Esophagus muscularis mucosa (tissue), 4 donors: ENCODE measurements at regions of chr5 and their contacts with region 1.

Region 1: DNA sequence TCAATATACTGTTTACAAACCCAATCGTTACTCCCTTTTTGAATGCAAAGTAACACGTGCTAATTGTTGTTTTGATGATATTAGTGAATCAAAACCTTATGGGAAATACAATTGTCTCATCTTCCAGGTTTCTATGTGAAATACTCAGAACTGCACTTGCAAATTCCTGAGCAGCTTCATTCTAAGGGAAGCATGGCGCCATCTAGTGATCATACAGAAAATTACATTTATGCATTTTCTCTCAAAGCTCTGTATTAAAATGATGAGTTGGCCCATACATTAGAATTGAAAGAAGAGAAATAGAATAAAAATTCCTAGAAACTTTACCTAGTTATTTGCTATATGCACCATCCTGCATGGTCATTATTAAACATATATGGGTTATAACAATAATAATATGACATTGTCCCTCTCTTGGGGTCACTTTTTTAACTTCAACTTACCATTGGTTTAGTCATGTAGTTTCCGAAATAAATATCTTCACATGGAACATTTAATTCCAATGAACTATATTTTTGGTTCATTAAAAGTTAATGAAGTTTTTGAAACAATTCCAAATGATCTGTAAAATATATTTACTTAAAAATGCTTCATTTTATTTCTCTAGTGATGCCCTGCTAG is 220.0 kb downstream of the PDE4D start:
- DNase-seq: no peak
- H3K4me3 ChIP-seq: no peak overlapping the region
- H3K27ac ChIP-seq: no peak overlapping the region
- H3K4me1 ChIP-seq: peaks cover 0 to 5% (median 0%) of the 10 kb centered on the region in 4 donors
- H3K27me3 ChIP-seq: no peaks in the 10 kb centered on the region
- CTCF ChIP-seq: peak; percentile 70 to 88 (median 75)
- EP300 ChIP-seq: no peak
- POLR2A ChIP-seq: no peak

Region 2: DNA sequence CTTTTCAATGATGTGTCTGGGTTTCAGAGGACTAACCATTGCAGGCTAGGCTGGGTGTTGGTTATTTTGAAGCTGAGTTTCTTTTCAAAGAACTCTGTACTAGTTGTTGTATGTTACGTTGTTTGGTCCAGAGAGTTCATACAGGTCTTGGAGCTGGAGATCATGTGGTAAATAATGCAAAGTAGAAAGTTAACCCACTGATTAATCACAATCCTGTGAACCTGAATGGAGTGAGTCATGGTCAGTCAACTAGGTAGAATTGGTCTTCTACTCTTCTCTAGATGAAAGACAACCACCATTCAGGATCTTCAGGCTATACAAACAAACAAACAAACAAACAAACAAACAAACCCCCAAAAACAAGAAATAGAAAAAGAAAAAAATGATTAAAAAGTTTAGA is 1802.1 kb before region 1 on chr5:
- intact Hi-C with region 1: no loop called
- DNase-seq: no peak
- H3K4me3 ChIP-seq: no peak overlapping the region
- H3K27ac ChIP-seq: no peak overlapping the region
- H3K4me1 ChIP-seq: no peaks in the 10 kb centered on the region
- H3K27me3 ChIP-seq: no peaks in the 10 kb centered on the region
- CTCF ChIP-seq: no peak
- EP300 ChIP-seq: no peak
- POLR2A ChIP-seq: no peak

Region 3: DNA sequence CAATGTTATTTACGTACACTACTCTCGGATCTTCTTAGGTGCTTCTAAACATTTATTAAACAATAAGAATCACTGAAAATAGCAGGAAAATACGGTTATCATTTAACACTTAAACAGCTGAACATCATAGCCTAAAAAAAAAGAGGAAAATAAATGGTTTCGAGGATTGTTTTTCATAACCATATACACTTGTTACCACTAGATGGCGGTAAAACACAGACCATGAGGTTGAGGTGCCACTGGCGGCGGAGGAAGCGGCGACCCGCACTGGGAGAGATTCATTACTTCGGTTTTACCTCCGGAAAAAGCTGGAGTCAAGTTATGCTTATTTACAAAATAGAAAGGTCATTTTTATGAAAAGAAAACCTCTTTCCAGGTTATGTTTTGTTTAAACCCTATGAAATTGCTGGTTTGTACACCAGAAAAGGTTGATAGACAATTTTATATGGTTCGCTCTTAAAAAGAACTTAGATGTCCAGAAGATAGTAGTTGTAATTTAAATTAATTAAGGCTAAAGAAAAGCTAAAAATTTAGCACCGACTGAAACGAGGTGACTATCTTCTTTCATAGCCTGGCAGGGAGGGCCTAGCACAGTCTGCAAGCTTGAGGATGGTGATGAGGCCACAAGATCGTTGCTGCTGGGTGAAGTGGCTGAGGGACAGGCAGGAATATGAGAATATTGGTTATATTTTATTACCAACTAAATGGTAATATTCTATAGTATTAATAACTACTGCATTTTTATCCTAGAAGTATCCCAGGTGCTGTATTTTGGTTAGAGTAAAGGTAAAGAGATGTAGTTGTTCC is 484.9 kb before region 1 on chr5:
- intact Hi-C with region 1: loop called (anchors 10 kb)
- DNase-seq: no peak
- H3K4me3 ChIP-seq: peak overlapping the region; percentile 23 to 43 (median 40)
- H3K27ac ChIP-seq: peak overlapping the region; percentile 31 to 66 (median 63)
- H3K4me1 ChIP-seq: peaks cover 12 to 44% (median 35%) of the 10 kb centered on the region in 4 donors
- H3K27me3 ChIP-seq: no peaks in the 10 kb centered on the region
- CTCF ChIP-seq: peak; percentile 76 to 92 (median 82)
- EP300 ChIP-seq: no peak
- POLR2A ChIP-seq: no peak

Region 4: DNA sequence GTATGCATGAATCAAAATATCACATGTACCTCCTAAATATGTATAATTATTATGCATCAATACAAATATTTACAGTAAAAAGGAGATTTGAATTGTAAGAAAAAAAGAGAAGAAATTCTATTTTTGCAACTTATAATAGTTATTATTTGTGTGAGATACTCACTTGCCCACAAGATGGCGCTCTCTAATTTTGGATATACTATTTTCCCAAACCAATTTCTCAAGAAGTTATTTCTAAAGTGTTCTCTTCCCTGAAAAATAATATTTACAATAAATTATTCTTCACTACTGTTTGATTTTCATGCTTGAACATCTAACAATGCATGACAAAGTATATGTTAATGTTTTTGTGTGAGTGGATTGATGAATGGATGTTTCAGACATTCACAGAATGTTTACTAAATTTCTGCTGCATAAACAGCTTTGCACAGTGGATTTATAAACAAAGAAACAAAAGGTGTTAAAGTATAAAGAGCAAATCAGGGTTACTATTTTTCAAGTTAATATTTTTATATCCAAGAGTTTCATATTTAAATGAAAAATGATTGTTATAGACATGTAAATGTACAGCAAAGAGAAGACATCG is 283.4 kb before region 1 on chr5:
- intact Hi-C with region 1: loop called (anchors 5 kb)
- DNase-seq: no peak
- H3K4me3 ChIP-seq: no peak overlapping the region
- H3K27ac ChIP-seq: no peak overlapping the region
- H3K4me1 ChIP-seq: no peaks in the 10 kb centered on the region
- H3K27me3 ChIP-seq: no peaks in the 10 kb centered on the region
- CTCF ChIP-seq: peak; percentile 56 to 74 (median 70)
- EP300 ChIP-seq: no peak
- POLR2A ChIP-seq: no peak

Region 5: DNA sequence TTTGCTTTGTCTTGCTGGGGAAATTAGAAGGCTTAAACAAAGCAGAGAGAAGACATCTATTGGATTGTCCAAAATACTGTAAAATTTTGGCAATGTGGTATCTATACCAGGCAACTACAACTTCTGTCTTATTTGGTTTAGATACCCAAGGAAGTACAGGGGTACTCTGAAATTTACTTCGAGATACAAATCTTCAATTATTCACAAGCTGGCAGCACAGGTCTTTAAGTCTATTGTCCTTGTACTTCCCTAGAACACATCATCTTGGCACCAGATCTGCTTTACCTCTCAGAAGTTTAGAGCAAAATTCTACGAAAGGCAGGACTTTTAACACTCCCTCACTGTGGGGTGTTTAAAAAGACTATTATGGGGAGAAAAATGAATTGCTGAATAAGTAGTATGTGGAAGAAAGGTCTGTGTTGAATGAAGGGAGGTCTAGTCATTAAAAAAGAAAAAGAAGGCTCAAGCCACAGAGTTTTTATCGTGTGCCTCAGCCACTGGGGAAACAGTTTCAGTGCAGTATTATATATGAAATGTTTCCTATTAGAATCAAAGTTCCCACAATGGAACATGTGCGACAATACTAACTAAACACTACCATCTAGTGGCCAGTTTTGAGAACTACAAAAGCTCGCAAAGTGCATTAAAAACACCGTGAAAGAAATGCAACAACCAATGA is 126.3 kb after region 1 on chr5:
- intact Hi-C with region 1: loop called (anchors 5 kb)
- DNase-seq: no peak
- H3K4me3 ChIP-seq: peak overlapping the region in 2 of 4 donors; percentile 5 to 6
- H3K27ac ChIP-seq: peak overlapping the region in 1 of 4 donors; percentile 6
- H3K4me1 ChIP-seq: peaks cover 3 to 22% (median 10%) of the 10 kb centered on the region in 4 donors
- H3K27me3 ChIP-seq: no peaks in the 10 kb centered on the region
- CTCF ChIP-seq: peak; percentile 80 to 86 (median 80)
- EP300 ChIP-seq: no peak
- POLR2A ChIP-seq: no peak

Region 6: DNA sequence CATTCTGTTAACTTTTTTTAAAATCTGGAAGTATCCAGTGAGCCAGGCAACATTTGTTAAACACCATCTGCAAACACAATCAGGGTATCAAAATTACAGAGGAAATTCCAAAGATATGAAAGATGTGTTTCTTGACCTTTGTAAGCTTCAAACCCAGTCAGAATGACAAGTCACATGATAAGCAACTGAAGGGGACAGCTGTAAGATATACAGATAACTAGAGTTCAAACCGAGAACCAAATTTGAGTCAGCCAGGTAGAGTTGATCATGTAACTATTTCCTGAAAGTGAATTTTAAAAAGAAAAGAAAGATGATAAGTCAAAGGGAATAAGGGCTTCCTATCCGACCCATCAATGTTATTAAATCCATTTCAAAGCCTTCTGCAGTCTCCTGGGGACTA is 830.2 kb after region 1 on chr5:
- intact Hi-C with region 1: no loop called
- DNase-seq: no peak
- H3K4me3 ChIP-seq: no peak overlapping the region
- H3K27ac ChIP-seq: peak overlapping the region in 1 of 4 donors; percentile 6
- H3K4me1 ChIP-seq: peaks cover 5 to 72% (median 40%) of the 10 kb centered on the region in 4 donors
- H3K27me3 ChIP-seq: no peaks in the 10 kb centered on the region
- CTCF ChIP-seq: no peak
- EP300 ChIP-seq: no peak
- POLR2A ChIP-seq: no peak